Cardiac septum (tissue), 1 donor: ENCODE measurements at regions of chr14 and their contacts with region 1.

Region 1: GRCh38 chr14:104078031-104078455 is 7.5 kb upstream of the ASPG start:
- DNase-seq: peak; percentile 88

Region 2: GRCh38 chr14:104130974-104131651 is 53.1 kb after region 1 on chr14:
- intact Hi-C with region 1: loop called (anchors 1 kb)
- DNase-seq: no peak

Region 3: DNA sequence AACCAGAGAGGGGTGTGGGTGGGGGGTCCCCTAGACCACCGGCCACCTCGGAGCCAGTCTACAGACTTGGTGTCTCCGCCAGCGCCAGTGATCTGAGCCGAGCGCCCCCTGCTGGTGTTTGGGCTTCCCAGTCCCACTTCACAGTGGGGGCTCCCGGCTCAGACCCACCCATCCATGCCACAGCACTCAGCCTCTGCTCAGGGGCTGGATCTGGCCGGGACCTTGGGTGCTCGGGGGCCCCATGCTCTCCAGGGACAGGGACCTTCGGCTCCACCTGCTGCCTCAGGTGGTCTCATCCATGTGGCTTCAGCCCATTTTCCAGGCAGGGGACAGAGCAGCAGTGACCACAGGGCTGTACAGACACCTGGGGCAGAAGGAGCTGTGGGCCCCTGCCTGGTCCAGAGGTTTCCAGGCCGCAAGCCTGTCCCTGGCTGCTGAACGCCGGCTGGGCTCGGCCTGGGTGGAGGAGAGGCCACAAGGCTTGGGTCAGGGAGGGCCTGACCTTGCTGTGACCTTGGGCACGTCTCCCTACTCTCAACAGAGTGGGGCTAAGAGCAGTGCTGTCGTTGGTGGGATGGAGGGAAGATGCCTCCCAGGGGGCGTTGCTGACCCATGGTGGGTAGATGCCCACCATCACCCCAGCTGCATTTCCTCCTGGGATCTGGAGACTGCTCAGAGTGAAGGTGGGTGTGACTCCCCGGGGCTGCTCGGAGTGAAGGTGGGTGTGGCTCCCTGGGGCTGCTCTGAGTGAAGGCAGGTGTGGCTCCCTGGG is 146.6 kb after region 1 on chr14:
- intact Hi-C with region 1: no loop called
- DNase-seq: no peak

Region 4: DNA sequence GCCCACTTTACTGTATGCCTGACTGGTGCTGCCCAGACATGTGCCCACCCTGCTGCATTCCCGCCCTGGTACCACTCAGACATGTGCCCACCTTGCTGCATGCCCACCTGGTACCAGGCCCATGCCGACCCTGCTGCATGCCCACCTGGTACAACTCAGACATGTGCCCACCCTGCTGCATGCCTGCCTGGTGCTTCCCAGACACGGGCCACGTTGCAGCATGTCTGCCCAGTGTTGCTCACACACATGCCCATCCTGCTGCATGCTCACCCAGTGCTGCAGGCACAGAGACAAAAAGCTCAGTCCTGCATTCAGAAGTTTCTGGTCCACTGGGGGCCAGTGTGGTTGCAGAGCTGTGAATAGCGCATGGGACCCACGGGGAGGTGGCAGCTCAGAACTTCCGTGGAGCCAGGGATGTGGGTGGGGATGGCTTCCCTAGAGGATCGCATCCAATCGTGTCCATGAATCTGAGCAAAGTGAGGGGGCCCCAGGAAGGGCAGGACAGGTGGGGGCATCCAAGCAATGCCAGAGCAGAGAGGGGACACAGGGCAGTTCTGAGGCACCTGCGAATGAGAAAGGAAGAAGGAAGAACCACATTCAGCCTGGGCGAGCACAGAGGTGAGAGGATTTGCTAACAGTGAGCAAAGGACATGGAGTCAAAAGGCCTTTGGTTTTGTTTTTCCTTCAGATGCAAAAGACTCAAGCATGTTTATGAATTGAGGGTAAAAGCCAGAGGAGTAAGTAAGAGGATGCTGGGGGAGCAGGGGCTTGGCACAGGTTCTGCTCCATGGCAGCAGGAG is 325.6 kb after region 1 on chr14:
- intact Hi-C with region 1: no loop called
- DNase-seq: peak; percentile 53

Region 5: GRCh38 chr14:104563742-104564615 is 485.9 kb after region 1 on chr14:
- intact Hi-C with region 1: loop called (anchors 5 kb)
- DNase-seq: peak; percentile 82

Region 6: GRCh38 chr14:104639889-104640548 is 562.0 kb after region 1 on chr14:
- intact Hi-C with region 1: loop called (anchors 5 kb)
- DNase-seq: no peak